ENCODE measurements at regions of chr10 and their contacts with region 1.

Region 1: GRCh38 chr10:80500572-80501380 is 36.9 kb upstream of the SH2D4B start:
- DNase-seq: peak; percentile 74
- H3K4me3 ChIP-seq: peak overlapping the region; percentile 14
- H3K27ac ChIP-seq: peak overlapping the region; percentile 91
- H3K4me1 ChIP-seq: peaks cover 99% of the 10 kb centered on the region
- H3K27me3 ChIP-seq: no peaks in the 10 kb centered on the region
- CTCF ChIP-seq: peak; percentile 40

Region 2: DNA sequence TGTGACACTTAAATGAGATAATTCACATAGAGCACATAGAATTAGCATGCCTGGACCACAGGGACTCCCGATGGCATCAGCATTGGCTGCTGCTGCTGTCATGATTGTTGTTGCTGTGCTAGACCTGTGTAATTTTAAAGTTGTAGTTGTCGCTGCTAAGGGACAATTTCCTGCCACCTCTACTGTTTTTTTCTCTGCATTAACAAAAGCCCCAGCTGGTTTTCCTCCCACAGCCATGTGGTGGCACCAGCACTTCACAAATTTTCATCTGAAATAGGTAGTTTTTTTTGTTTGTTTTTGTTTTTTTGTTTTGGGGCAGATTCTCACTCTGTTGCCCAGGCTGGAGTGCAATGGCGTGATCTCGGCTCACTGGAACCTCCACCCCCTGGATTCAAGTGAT is 117.8 kb before region 1 on chr10:
- intact Hi-C with region 1: loop called (anchors 5 kb)
- DNase-seq: no peak
- H3K4me3 ChIP-seq: no peak overlapping the region
- H3K27ac ChIP-seq: no peak overlapping the region
- H3K4me1 ChIP-seq: peaks cover 13% of the 10 kb centered on the region
- H3K27me3 ChIP-seq: no peaks in the 10 kb centered on the region
- CTCF ChIP-seq: peak; percentile 80

Region 3: DNA sequence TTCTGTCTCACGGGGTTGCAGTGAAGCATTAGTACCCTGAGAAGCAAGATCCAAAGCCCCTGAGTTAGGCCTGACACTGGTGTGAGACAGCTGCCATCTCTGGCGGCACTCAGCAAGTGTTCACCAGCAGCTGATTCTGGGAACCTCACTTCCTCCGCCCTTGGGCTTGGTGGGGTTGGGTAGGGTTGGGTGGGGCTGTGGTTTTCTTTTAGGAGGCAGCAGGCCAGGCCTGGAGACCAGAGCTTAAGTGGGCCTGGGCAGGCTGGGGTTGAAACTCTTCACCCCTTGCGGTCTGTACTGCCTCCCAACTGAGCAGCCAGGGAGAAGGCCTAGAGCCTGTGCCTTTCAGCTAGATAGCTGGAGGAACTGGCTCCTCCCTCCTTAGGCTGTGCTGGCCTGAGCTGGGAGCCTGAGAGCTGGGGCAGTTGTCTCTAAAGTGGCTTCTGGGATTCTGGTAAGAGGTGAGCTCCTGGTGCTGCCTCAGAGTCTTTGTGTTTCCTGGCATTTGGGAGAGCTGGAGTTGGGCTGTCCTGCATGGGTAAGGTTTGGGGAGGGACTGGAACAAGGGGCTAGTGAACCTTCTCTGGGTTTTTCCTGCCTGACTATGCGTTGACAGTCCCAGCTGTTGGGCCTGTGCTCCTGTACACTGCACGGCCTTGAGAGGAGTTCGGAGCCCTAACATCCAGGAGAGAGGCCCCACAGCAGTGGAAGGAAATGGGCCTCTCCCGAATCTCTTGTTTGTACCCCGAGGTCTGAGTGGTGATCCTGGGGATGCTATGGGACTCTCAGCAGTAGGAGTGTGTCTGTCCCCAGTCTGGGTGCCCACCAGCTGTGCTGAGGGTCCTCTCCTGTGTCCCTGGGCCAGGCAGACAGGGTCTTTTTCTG is 41.5 kb before region 1 on chr10:
- intact Hi-C with region 1: loop called (anchors 5 kb)
- DNase-seq: peak; percentile 65
- H3K4me3 ChIP-seq: peak overlapping the region; percentile 99
- H3K27ac ChIP-seq: peak overlapping the region; percentile 100
- H3K4me1 ChIP-seq: peaks cover 100% of the 10 kb centered on the region
- H3K27me3 ChIP-seq: no peaks in the 10 kb centered on the region
- CTCF ChIP-seq: no peak

Region 4: GRCh38 chr10:80477813-80478212 is 23.0 kb before region 1 on chr10:
- intact Hi-C with region 1: no loop called
- DNase-seq: no peak
- H3K4me3 ChIP-seq: no peak overlapping the region
- H3K27ac ChIP-seq: no peak overlapping the region
- H3K4me1 ChIP-seq: peaks cover 72% of the 10 kb centered on the region
- H3K27me3 ChIP-seq: no peaks in the 10 kb centered on the region
- CTCF ChIP-seq: no peak

Region 5: DNA sequence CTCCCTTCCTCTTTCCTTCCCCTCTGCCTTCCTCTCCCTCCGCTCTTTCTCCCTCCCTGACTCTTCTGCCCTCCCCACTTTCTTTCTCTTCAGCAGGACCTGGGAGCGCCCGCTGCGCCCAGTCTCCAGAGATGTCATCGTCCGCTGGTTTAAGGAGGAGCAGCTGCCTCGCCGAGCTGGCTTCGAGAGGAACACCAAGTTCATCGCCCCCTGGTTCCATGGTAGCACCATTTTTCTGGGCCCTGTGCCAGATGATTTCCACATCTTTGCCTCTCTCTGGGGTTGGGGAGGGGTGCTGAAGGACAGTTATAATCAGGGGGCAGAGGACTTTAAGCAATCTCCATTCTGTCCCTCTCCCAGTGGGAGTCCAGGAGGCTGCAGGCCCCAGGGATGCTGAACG is 108.6 kb after region 1 on chr10:
- intact Hi-C with region 1: no loop called
- DNase-seq: no peak
- H3K4me3 ChIP-seq: no peak overlapping the region
- H3K27ac ChIP-seq: no peak overlapping the region
- H3K4me1 ChIP-seq: no peaks in the 10 kb centered on the region
- H3K27me3 ChIP-seq: no peaks in the 10 kb centered on the region
- CTCF ChIP-seq: no peak